HCT116 (cell line): ENCODE measurements at regions of chr1 and their contacts with region 1.

Region 1: DNA sequence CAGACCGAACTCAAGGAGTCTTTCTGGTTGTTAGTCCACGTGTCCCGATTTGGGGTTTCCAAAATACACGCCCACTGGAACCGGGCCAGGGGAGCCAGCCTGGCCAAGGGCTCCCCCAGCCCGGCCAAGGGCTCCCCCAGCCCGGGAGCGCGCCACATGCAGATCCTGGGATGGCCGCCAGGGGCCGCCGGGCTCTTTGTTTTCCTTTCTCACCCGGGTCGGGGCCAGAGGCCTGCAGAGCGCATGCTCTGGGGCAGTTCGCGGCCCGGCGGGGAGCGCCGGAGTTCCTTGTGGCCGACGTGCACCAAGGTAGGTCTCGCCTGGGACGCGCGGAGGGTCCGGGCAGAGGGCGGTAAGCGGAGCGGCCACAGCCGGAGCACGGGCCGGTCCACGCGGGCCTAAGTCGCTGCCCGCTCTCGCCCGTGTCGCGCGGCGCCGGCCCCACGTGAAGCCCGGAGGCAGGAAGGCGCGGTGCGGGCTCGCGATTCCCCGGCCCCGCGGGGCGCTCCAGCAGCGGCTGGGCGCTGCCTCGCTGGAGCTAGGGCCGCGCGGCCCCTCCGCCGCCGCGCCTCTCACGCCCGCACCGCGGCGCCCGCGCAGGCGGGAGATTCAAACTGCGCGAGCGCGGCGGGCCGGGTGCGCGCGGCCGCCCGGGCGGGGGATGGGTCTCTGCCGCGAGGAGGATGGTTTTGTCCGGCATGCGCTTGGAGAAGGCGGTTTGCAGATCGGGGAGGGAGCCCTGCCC is 12.3 kb downstream of the RCC1 start:
- DNase-seq: no peak
- ATAC-seq: peak; percentile 75
- H3K4me3 ChIP-seq: peak overlapping the region; percentile 69 to 90
- H3K27ac ChIP-seq: peak overlapping the region; percentile 99
- H3K4me1 ChIP-seq: peaks cover 13 to 60% of the 10 kb centered on the region in 2 experiments; a peak in 3 of 4 replicates
- H3K27me3 ChIP-seq: no peaks in the 10 kb centered on the region
- CTCF ChIP-seq: peak in 2 of 3 experiments; percentile 91 to 97; a peak in 4 of 6 replicates
- POLR2A ChIP-seq: peak; percentile 45
- RAD21 ChIP-seq: no peak

Region 2: GRCh38 chr1:28505406-28506187 is 12.6 kb before region 1 on chr1 and contains the start of gene RCC1:
- CTCF ChIA-PET with region 1: no interaction called
- POLR2A ChIA-PET with region 1: interaction called, 12 read pairs
- RAD21 ChIA-PET with region 1: no interaction called
- intact Hi-C with region 1: no loop called
- DNase-seq: peak; percentile 97
- ATAC-seq: peak; percentile 62
- H3K4me3 ChIP-seq: peak within 1 kb of the TSS; percentile 82 to 94
- H3K27ac ChIP-seq: peak within 1 kb of the TSS; percentile 97
- H3K4me1 ChIP-seq: peaks cover 29 to 72% of the 10 kb centered on the region in 2 experiments
- H3K27me3 ChIP-seq: no peaks in the 10 kb centered on the region
- CTCF ChIP-seq: no peak
- POLR2A ChIP-seq: peak; percentile 99
- RAD21 ChIP-seq: no peak
- total RNA-seq, gene RCC1: 124 TPM

Region 3: GRCh38 chr1:28552758-28553663 is 34.8 kb after region 1 on chr1 and contains the start of gene TRNAU1AP:
- CTCF ChIA-PET with region 1: no interaction called
- POLR2A ChIA-PET with region 1: interaction called, 6 read pairs
- RAD21 ChIA-PET with region 1: no interaction called
- intact Hi-C with region 1: loop called (anchors 2 kb)
- DNase-seq: peak; percentile 91
- ATAC-seq: peak; percentile 92
- H3K4me3 ChIP-seq: peak within 1 kb of the TSS; percentile 85 to 99
- H3K27ac ChIP-seq: peak within 1 kb of the TSS; percentile 90
- H3K4me1 ChIP-seq: peaks cover 6 to 22% of the 10 kb centered on the region in 2 experiments; a peak in 3 of 4 replicates
- H3K27me3 ChIP-seq: no peaks in the 10 kb centered on the region
- CTCF ChIP-seq: no peak
- POLR2A ChIP-seq: peak; percentile 78
- RAD21 ChIP-seq: no peak
- total RNA-seq, gene TRNAU1AP: 29.7 TPM

Region 4: DNA sequence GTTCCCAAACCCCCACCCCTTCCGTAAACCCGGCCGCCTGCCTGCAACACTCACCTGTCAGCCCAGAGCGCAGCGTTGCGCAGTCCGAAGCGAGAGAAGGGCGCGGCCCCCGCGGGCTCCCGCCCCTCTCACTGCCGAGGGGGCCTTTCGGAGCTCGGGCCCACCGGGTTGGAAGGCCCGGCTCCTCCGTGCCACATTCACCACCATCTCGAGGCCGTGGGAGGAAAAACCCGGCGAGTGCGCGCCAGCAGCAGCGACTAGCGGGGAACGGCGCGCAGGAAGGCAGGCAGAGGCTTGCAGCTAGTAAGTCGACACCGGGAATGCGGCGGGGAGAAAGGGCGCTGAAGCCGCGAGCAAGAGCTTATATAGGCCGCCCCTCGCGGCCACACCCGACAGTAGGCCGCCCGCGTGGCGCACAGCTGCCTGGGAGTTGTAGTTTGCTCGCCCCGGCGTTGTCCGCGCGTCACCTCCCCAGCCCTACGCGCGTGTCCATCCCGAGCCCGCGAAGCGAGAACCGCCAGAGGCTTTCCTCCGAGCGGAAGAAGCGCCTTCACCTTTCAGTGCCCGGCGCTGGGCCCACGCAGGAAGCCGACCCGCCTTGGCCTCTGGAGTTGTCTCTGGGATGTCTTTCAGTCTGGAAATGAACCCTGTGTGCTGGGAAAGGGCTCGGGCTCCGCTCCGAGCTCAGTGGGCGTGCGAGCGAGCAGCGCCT is 63.5 kb after region 1 on chr1:
- CTCF ChIA-PET with region 1: interaction called, 3 read pairs
- POLR2A ChIA-PET with region 1: interaction called, 16 read pairs
- RAD21 ChIA-PET with region 1: no interaction called
- intact Hi-C with region 1: no loop called
- DNase-seq: peak; percentile 90
- ATAC-seq: peak; percentile 79
- H3K4me3 ChIP-seq: peak overlapping the region; percentile 97 to 99
- H3K27ac ChIP-seq: peak overlapping the region; percentile 93
- H3K4me1 ChIP-seq: peaks cover 9 to 29% of the 10 kb centered on the region in 2 experiments; a peak in 3 of 4 replicates
- H3K27me3 ChIP-seq: no peaks in the 10 kb centered on the region
- CTCF ChIP-seq: 0 out of 6 replicates have a peak, but pooled peaks of 1 of the 3 experiments have one; percentile 2
- POLR2A ChIP-seq: peak; percentile 99
- RAD21 ChIP-seq: no peak